Sciatic nerve (tissue), 2 donors: ENCODE measurements at regions of chr6 and their contacts with region 1.

Region 1: GRCh38 chr6:16324606-16325225 is 86.3 kb downstream of the GMPR start:
- DNase-seq: peak; percentile 2
- ATAC-seq: no peak

Region 2: DNA sequence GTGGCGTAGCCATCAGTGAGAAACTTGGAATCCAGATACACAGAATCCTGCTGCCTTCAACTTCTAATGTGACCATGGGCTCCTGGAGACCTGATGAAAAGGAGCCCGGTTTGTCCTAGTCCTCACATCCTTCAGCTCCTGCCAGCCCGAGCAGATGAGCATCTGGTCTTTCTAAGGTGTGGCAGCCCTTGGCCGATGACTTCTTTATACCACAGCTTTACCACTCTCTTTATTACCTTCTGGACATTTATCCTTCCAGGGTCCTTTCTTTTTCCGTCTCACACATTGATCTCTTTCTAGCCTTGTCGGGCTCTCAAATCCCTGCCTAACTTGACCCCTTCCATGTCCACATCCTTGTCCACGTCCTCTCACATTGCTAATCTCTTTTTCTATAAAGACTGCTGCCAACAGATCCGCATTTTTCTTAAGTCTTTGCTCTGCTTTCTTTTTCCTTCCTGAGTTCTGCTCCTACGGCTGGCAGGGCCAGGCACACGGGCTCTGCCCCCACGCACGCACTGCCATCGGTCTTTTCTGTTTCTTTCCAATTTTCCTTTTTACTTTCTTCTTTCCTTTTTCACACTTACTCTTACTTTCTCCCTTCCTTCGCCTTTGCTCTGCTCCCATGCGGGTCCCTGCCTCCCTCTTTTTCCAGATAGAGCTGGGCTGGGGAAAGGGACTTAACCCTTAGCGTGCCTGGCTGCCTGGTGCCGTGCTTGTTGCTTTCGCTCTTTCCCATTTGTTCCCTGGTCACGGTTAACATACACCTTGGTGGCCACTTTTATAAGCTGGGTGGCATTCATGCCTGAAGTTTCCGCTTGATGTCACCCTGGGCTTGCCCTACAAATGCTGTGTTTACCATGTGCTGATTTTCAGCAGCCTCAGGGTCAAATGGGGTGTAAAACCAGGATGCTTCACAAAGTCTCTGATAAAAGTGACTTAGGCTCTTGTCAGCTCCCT is 95.7 kb before region 1 on chr6:
- intact Hi-C with region 1: loop called (anchors 5 kb)
- DNase-seq: no peak
- ATAC-seq: no peak

Region 3: GRCh38 chr6:16313732-16314131 is 11.0 kb before region 1 on chr6:
- intact Hi-C with region 1: loop called (anchors 1 kb)
- DNase-seq: no peak
- ATAC-seq: no peak